Tibial artery (tissue), 4 donors: ENCODE measurements at regions of chr3 and their contacts with region 1.

Region 1: DNA sequence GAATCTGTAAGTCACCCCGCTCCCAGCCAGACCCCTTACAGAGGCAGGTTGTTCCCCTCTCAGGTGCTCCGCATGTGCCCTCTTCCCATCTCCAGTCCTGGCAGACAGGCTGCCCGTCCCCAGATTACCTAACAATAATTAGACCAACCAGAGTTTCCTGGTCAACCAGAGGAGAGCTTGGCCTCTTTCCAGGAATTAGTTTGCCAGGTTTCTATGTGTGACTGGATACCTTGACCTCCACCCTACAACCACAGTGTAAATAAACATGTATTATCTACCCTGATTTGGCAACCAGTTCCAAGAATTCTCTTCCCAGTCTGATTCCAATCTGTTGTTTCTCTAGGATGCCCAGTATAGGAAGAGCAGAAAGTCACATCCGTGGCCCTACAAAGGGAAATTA is 178.0 kb upstream of the UMPS start:
- DNase-seq: no peak
- H3K4me3 ChIP-seq: no peak overlapping the region
- H3K27ac ChIP-seq: no peak overlapping the region
- H3K4me1 ChIP-seq: peaks cover 0 to 14% (median 7%) of the 10 kb centered on the region in 4 donors
- H3K27me3 ChIP-seq: no peaks in the 10 kb centered on the region
- CTCF ChIP-seq: no peak

Region 2: GRCh38 chr3:124401843-124402242 is 150.4 kb before region 1 on chr3:
- intact Hi-C with region 1: no loop called
- DNase-seq: no peak
- H3K4me3 ChIP-seq: no peak overlapping the region
- H3K27ac ChIP-seq: peak overlapping the region in 1 of 2 donors; percentile 38
- H3K4me1 ChIP-seq: peaks cover 0 to 41% (median 16%) of the 10 kb centered on the region in 4 donors
- H3K27me3 ChIP-seq: no peaks in the 10 kb centered on the region
- CTCF ChIP-seq: no peak

Region 3: GRCh38 chr3:124467980-124468902 is 84.0 kb before region 1 on chr3:
- intact Hi-C with region 1: no loop called
- DNase-seq: no peak
- H3K4me3 ChIP-seq: no peak overlapping the region
- H3K27ac ChIP-seq: peak overlapping the region in 1 of 2 donors; percentile 36
- H3K4me1 ChIP-seq: peaks cover 0 to 2% (median 0%) of the 10 kb centered on the region in 4 donors
- H3K27me3 ChIP-seq: no peaks in the 10 kb centered on the region
- CTCF ChIP-seq: peak; percentile 93 to 98

Region 4: GRCh38 chr3:124496066-124496465 is 56.2 kb before region 1 on chr3:
- intact Hi-C with region 1: loop called (anchors 5 kb)
- DNase-seq: no peak
- H3K4me3 ChIP-seq: no peak overlapping the region
- H3K27ac ChIP-seq: peak overlapping the region in 1 of 2 donors; percentile 24
- H3K4me1 ChIP-seq: peaks cover 0 to 23% (median 3%) of the 10 kb centered on the region in 4 donors
- H3K27me3 ChIP-seq: no peaks in the 10 kb centered on the region
- CTCF ChIP-seq: no peak

Region 5: DNA sequence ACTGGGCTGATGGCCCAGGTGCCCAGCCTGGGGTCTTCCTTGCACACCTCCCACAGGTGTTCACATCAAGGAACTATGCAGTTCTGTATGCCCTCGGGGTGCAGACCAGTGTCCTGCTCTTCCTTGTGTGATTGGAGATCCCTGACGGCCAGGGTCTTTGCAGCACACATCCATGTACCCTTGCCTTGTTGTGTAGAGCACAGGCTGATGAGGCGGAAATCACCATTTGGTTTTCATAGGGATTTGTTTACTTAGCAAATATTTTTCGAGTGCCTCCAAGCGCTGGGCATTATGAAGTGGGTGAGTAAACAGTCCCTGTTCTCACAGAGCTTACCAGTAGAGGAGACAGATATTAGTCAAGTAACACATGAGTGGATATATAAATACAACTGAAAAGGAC is 31.3 kb before region 1 on chr3:
- intact Hi-C with region 1: no loop called
- DNase-seq: no peak
- H3K4me3 ChIP-seq: no peak overlapping the region
- H3K27ac ChIP-seq: no peak overlapping the region
- H3K4me1 ChIP-seq: no peaks in the 10 kb centered on the region
- H3K27me3 ChIP-seq: no peaks in the 10 kb centered on the region
- CTCF ChIP-seq: no peak